ENCODE measurements at regions of chr5 and their contacts with region 1.

Region 1: DNA sequence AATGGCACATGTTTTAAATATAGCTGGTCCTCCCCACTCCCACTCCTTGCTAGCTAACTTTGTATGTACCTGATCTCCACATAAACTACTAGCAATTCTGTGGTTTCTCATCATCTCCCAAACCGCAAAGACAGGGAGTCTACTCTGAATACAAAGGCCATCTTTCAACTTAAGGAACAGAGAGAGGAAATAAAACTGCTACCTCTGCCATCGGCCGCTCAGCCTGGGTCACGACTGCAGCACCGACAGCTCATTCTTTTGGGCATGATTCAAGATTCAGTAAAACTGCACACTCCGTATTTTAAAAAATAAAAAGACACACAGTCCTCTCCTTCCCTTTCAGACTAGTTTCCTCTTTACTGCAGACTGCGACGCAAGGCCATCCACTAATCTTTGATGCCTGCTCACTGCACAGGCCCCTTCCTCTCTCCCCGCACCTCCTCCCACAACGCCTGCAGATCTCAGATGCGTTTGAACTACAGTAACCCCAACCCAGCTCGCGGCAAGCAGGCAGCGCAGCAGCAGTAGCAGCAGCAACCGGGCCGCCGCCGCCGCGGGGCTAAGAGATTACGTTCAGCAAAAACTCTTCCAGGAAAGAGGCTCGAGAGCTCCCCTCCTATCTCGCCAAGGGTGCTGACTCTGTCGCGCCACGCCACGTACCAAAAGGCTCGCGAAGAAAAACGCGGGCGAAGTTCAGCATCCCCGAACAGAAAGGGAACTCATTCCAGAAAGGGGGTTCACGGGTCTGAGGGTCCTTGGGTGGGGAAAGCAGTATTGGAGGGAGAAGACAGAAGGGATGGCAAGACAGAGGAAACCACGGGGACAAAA is 1.5 kb downstream of the RNF145 start:
- DNase-seq: peak; percentile 87
- H3K4me3 Mint-ChIP-seq: peak overlapping the region; percentile 85
- H3K27ac Mint-ChIP-seq: peak overlapping the region; percentile 94
- H3K4me1 Mint-ChIP-seq: peaks cover 66% of the 10 kb centered on the region
- H3K27me3 Mint-ChIP-seq: no peaks in the 10 kb centered on the region

Region 2: DNA sequence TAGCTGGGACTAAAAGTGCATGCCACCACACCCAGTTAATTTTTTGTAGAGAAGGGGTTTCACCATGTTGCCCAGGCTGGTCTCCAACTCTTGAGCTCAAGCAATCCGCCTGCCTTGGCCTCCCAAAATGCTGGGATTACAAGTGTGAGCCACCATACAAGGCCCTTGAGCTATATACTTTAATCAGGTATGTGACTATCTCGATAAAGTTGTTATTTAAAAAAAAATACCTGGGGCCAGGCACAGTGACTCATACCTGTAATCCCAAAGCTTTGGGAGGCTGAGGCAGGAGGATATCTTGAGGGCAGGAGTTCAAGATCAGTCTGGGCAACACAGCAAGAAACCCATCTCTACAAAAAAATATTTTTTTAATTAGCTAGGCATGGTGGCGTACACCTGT is 17.7 kb before region 1 on chr5:
- CTCF ChIA-PET with region 1: interaction called, 11 read pairs
- POLR2A ChIA-PET with region 1: interaction called, 4 read pairs
- DNase-seq: no peak
- H3K4me3 Mint-ChIP-seq: no peak overlapping the region
- H3K27ac Mint-ChIP-seq: no peak overlapping the region
- H3K4me1 Mint-ChIP-seq: peaks cover 39% of the 10 kb centered on the region
- H3K27me3 Mint-ChIP-seq: no peaks in the 10 kb centered on the region

Region 3: DNA sequence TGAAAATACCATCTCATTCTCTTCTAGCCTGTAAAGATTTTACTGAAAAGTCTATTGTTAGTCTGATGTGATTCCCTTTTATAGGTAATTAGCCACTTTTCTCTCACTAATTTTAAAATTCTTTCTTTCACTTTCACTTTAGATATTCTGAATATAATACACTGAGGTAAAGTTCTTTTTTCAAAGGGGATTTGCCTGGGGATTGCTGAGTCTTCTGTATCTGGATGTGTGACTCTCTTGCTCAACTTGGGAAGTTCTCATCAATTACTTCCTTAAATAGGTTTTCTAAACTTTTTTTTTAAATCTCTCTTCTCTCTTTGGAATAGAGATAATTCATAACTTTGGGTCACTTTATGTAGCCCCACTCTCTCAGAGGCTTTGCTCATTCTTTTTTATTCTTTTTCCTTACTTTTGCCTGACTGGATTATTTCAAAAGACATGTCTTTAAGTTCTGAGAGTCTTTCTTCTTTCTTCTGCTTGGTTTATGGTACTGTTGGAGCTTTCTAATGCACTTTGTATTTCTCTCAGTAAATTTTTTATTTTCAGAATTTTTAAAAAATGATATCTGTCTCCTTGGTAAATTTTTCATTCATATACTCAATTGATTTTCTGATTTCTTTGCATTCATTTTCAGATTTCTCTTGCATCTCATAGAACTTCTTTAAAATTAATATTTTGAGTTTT is 178.3 kb after region 1 on chr5:
- CTCF ChIA-PET with region 1: no interaction called
- POLR2A ChIA-PET with region 1: no interaction called
- DNase-seq: no peak
- H3K4me3 Mint-ChIP-seq: no peak overlapping the region
- H3K27ac Mint-ChIP-seq: peak overlapping the region; percentile 4
- H3K4me1 Mint-ChIP-seq: peaks cover 7% of the 10 kb centered on the region
- H3K27me3 Mint-ChIP-seq: peaks cover 62% of the 10 kb centered on the region